ENCODE measurements at regions of chr17 and their contacts with region 1.

Region 1: DNA sequence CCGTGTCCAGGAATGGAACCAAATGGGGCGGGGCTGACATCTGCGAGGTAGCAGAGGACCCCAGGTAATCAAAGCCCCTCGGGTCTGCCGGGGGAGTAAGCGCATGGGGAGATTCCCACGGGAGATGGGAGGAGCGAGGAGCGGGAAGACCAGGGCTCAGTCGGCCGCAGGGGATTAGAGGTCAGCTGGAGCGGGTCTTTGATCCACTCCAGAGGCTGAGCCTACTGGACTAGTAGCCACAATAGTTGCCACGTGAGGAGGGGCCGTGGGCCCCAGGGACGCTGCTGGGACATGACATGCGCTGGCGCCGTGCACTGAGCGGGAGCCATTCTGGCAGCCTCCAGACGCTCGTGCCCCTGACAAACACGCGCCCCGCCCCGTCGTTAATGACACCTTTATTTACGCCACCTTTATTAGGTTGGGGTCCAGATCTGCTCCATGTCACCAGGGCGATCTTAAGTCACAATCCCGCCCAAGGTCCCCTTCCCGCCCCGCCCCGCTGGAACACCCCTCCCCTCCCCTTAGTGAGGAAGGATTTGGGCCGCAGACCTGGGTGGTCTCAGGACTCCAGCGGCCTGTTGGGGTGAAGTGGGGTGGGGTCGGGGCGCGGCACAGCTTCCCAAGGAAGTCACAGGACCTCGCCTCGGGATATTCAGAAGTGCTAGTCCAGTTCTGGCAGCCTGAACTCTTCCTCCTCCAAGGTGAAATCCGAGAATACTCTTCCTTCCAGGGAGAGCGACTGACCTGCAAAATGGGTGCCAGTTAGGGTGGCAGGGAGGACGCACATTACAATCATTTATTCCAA is 15.0 kb downstream of the PPY start:
- DNase-seq: no peak
- H3K4me3 ChIP-seq: peak overlapping the region; percentile 3
- CTCF ChIP-seq: no peak

Region 2: GRCh38 chr17:44014437-44015172 is 87.3 kb after region 1 on chr17 and contains the start of gene TMEM101:
- in situ Hi-C with region 1: loop called (anchors 5 kb)
- DNase-seq: peak; percentile 90
- H3K4me3 ChIP-seq: peak within 1 kb of the TSS; percentile 98
- CTCF ChIP-seq: no peak